PC-9 (cell line): ENCODE measurements at regions of chr15 and their contacts with region 1.

Region 1: DNA sequence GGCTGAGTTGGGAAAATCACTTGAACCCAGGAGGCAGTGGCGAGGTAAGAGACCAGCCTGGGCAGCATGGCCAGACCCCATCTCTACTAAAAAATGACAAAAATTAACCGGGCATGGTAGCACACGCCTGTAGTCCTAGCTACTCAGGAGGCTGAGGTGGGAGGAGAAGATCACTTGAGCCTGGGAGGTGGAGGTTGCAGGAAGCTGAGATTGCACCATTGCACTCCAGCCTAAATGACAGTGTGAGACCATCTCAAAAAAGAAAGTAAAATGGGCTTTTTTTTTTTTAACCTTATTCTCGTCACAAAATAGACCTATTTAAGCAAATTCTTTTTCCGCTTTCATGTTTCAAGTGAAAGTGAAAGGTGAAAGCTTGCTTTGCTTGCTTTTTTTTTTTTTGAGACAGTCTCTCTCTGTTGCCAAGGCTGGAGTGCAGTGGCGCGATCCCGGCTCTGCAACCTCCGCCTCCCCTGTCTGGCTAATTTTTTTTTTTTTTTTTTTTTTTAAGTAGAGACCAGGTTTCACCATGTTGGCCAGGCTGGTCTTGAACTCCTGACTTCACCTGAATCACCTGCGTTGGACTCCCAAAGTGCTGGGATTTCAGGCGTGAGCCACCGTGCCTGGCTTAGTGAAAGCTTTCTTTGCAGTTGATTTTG is 3.6 kb downstream of the PDIA3 start:
- DNase-seq: no peak
- H3K4me3 ChIP-seq: no peak overlapping the region
- H3K27ac ChIP-seq: no peak overlapping the region
- H3K4me1 ChIP-seq: no peaks in the 10 kb centered on the region
- H3K27me3 ChIP-seq: no peaks in the 10 kb centered on the region
- CTCF ChIP-seq: no peak

Region 2: DNA sequence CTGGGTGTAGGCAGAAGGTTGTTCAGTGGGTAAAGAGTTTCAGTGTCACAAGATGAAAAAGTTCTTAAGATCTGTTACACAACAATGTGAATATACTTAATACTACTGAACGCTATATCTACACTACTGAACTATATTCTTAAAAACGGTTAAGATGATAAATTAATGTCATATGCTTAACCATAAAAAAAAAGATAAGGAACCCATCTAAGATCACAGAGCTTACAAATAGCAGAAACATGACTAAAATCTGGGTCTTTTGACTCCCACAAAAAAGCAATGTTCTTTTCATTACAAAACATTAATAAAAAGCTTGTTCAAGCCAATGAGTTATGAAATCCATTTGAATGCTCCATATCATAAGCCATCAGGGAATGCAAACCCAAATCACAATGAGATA is 678.4 kb before region 1 on chr15:
- CTCF ChIA-PET with region 1: no interaction called
- POLR2A ChIA-PET with region 1: no interaction called
- intact Hi-C with region 1: no loop called
- DNase-seq: no peak
- H3K4me3 ChIP-seq: no peak overlapping the region
- H3K27ac ChIP-seq: no peak overlapping the region
- H3K4me1 ChIP-seq: no peaks in the 10 kb centered on the region
- H3K27me3 ChIP-seq: no peaks in the 10 kb centered on the region
- CTCF ChIP-seq: no peak

Region 3: DNA sequence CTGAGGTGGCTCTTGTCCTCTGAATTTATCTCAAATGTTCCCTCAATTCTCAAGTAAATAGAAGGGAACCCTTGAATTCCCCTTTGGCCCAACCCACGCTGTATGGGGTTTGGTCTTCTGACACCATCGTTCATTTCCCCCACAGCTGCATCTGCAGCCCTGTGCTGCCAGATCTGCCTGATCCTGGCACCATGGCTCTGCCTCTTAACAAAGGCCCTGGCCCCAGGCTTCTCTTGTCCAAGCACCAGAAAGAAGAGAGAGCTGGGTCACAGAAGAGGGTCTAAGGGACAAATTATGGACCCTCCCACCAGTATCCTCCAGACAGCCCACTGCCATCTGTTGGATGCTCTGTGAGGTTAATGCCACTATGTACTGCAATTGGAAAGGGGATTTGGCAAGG is 230.6 kb before region 1 on chr15:
- CTCF ChIA-PET with region 1: no interaction called
- POLR2A ChIA-PET with region 1: interaction called, 16 read pairs
- intact Hi-C with region 1: no loop called
- DNase-seq: no peak
- H3K4me3 ChIP-seq: no peak overlapping the region
- H3K27ac ChIP-seq: no peak overlapping the region
- H3K4me1 ChIP-seq: no peaks in the 10 kb centered on the region
- H3K27me3 ChIP-seq: peaks cover 22% of the 10 kb centered on the region
- CTCF ChIP-seq: no peak

Region 4: DNA sequence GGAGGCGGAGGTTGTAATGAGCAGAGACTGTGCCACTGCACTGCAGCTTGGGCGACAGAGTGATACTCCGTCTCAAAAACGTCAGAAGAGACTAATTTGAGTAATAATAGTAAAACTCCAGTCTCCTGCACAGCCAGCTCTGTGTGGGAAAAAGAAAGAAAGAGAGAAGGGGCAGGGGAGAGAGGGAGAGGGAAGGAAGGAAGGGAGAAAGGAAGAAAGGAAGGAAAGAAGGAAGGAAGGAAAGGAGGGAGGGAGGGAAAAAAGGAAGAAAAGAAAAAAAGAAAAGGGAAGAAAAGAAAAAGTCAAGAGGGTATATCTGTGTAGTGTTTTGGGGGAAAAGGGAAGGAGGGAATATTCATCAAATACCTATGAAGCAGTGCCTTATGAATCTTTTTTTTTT is 26.7 kb before region 1 on chr15:
- CTCF ChIA-PET with region 1: no interaction called
- POLR2A ChIA-PET with region 1: no interaction called
- intact Hi-C with region 1: no loop called
- DNase-seq: no peak
- H3K4me3 ChIP-seq: no peak overlapping the region
- H3K27ac ChIP-seq: no peak overlapping the region
- H3K4me1 ChIP-seq: peaks cover 5% of the 10 kb centered on the region; the same call in 1 of the 2 replicates
- H3K27me3 ChIP-seq: no peaks in the 10 kb centered on the region
- CTCF ChIP-seq: no peak

Region 5: GRCh38 chr15:44426975-44427755 is 677.3 kb after region 1 on chr15 and contains the start of gene CTDSPL2:
- CTCF ChIA-PET with region 1: no interaction called
- POLR2A ChIA-PET with region 1: interaction called, 16 read pairs
- intact Hi-C with region 1: no loop called
- DNase-seq: peak; percentile 89 to 97
- H3K4me3 ChIP-seq: peak within 1 kb of the TSS; percentile 96
- H3K27ac ChIP-seq: peak within 1 kb of the TSS; percentile 95
- H3K4me1 ChIP-seq: peaks cover 13% of the 10 kb centered on the region; the same call in 1 of the 2 replicates
- H3K27me3 ChIP-seq: no peaks in the 10 kb centered on the region
- CTCF ChIP-seq: peak; percentile 35; the same call in 1 of the 2 replicates
- total RNA-seq, gene CTDSPL2: 31.5 and 55.0 TPM in 2 replicates